CD4-positive, alpha-beta memory T cell (primary cell): ENCODE measurements at regions of chr3 and their contacts with region 1.

Region 1: DNA sequence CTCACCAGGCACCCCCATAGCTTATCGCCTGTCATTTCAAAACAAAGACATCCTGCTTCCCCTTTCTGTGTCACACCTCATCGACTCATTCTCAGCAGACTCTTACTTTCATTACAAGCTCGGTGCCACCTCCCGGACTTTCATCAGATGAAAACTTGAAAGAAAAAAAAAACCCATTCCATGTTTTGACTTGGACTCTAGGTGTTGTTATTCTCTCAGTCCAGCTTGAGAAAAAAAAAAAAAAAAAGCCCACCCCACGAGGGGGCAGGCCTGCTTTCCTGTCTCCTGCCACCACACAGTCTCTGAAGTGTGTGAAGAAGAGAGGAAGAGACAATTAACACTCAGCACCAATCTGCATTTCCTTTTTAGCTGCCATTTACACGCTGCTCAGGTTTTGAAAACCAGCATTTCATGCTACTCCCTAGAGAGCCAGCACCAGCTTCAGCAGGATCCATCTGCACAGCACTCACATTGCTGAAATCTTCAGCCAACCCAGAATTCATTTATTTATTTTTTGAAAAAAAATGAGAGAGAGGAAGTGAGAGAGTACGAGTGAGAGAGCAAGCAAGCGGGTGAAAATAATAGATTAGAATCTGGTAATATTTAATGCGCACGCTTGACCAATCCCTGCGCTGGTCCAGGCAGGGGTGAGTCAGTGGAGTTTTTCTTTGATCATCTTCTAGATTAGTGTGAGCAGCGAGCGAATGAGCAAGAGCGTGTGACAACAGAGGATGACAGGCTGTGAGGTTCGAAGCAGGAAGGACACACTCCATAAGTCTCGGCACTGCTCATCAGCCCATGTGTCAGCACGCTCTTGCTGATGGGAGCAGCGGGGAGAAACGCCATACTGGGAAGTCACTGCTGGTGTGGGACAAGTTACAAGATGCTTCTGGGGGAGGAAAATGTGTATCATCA is 23.5 kb downstream of the ZNF80 start:
- DNase-seq: peak; percentile 74 to 92 (median 79)
- H3K4me3 ChIP-seq: peak overlapping the region; percentile 26 to 58
- H3K4me3 Mint-ChIP-seq: no peak overlapping the region
- H3K27ac ChIP-seq: peak overlapping the region; percentile 86
- H3K27ac Mint-ChIP-seq: no peak overlapping the region
- H3K4me1 ChIP-seq: peaks cover 71% of the 10 kb centered on the region
- H3K4me1 Mint-ChIP-seq: peaks cover 0 to 20% (median 7%) of the 10 kb centered on the region in 4 donors
- H3K27me3 ChIP-seq: no peaks in the 10 kb centered on the region
- H3K27me3 Mint-ChIP-seq: no peaks in the 10 kb centered on the region

Region 2: GRCh38 chr3:113552851-113553250 is 661.0 kb before region 1 on chr3:
- CTCF ChIA-PET with region 1: no interaction called
- POLR2A ChIA-PET with region 1: no interaction called
- intact Hi-C with region 1: no loop called
- DNase-seq: peak; percentile 19 to 40 (median 27)
- H3K4me3 ChIP-seq: no peak overlapping the region
- H3K4me3 Mint-ChIP-seq: no peak overlapping the region
- H3K27ac ChIP-seq: no peak overlapping the region
- H3K27ac Mint-ChIP-seq: peak overlapping the region in 3 of 7 donors; percentile 2 to 77 (median 25)
- H3K4me1 ChIP-seq: peaks cover 15% of the 10 kb centered on the region
- H3K4me1 Mint-ChIP-seq: peaks cover 31 to 63% (median 38%) of the 10 kb centered on the region in 4 donors
- H3K27me3 ChIP-seq: no peaks in the 10 kb centered on the region
- H3K27me3 Mint-ChIP-seq: no peaks in the 10 kb centered on the region

Region 3: DNA sequence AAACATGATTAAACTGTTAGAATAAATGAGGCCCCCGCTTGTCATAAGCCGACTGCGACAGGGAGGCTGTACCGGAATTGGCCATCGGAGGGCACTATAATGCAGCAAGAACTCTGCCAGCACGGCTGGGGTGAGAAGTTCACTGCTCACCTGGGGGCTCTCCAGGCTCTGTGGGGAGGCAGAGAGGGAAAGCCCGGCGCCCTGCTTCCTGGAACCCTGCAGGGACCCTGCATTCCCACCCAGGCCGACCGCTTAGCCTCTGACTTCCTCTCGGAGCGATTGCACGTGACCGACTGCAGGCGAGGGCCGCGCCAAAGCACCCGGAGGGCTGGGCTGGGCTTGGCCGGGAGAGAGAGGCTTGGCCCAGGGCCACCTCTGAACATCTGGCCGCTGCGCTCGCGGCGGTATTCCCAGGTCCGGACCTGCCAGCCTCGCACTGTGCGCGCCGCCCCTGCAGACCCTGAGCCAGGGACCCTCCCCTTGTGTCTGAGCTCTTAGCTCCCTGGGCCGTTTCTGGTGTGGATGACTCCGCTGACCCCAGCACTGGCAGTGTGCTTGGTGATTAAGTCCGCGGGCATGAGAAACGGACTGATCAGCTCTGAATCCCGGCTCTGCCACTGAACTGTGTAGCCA is 61.2 kb before region 1 on chr3:
- CTCF ChIA-PET with region 1: interaction called, 20 read pairs
- POLR2A ChIA-PET with region 1: interaction called, 19 read pairs
- intact Hi-C with region 1: loop called (anchors 1 kb)
- DNase-seq: peak; percentile 76 to 81 (median 78)
- H3K4me3 ChIP-seq: peak overlapping the region in 1 of 2 donors; percentile 34
- H3K4me3 Mint-ChIP-seq: peak overlapping the region; percentile 58 to 76 (median 68)
- H3K27ac ChIP-seq: no peak overlapping the region
- H3K27ac Mint-ChIP-seq: peak overlapping the region in 6 of 7 donors; percentile 4 to 79 (median 46)
- H3K4me1 ChIP-seq: peaks cover 6% of the 10 kb centered on the region
- H3K4me1 Mint-ChIP-seq: peaks cover 0 to 6% (median 5%) of the 10 kb centered on the region in 4 donors
- H3K27me3 ChIP-seq: no peaks in the 10 kb centered on the region
- H3K27me3 Mint-ChIP-seq: no peaks in the 10 kb centered on the region

Region 4: DNA sequence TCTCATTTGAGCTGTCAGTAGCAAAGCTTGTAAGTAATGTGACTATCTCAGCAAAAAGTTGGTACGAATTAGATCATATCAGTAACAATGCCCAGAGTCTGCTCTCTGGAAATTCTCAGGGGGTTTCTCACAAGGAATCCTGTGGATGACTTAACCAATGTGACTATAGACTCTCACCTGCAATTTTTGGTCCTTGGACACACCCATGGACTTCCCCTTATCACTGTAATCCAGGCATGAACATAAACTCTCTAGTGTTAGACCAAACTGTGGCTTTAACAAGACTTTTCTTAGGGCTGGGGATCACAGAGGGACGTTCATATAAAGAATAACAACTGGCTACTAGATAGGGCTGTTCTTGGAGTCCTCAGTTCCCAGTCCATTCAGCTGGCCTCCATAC is 27.4 kb after region 1 on chr3:
- CTCF ChIA-PET with region 1: interaction called, 44 read pairs
- POLR2A ChIA-PET with region 1: interaction called, 188 read pairs
- intact Hi-C with region 1: no loop called
- DNase-seq: no peak
- H3K4me3 ChIP-seq: no peak overlapping the region
- H3K4me3 Mint-ChIP-seq: no peak overlapping the region
- H3K27ac ChIP-seq: no peak overlapping the region
- H3K27ac Mint-ChIP-seq: peak overlapping the region in 4 of 7 donors; percentile 1 to 41 (median 8)
- H3K4me1 ChIP-seq: peaks cover 9% of the 10 kb centered on the region
- H3K4me1 Mint-ChIP-seq: peaks cover 9 to 22% (median 15%) of the 10 kb centered on the region in 4 donors
- H3K27me3 ChIP-seq: no peaks in the 10 kb centered on the region
- H3K27me3 Mint-ChIP-seq: no peaks in the 10 kb centered on the region

Region 5: DNA sequence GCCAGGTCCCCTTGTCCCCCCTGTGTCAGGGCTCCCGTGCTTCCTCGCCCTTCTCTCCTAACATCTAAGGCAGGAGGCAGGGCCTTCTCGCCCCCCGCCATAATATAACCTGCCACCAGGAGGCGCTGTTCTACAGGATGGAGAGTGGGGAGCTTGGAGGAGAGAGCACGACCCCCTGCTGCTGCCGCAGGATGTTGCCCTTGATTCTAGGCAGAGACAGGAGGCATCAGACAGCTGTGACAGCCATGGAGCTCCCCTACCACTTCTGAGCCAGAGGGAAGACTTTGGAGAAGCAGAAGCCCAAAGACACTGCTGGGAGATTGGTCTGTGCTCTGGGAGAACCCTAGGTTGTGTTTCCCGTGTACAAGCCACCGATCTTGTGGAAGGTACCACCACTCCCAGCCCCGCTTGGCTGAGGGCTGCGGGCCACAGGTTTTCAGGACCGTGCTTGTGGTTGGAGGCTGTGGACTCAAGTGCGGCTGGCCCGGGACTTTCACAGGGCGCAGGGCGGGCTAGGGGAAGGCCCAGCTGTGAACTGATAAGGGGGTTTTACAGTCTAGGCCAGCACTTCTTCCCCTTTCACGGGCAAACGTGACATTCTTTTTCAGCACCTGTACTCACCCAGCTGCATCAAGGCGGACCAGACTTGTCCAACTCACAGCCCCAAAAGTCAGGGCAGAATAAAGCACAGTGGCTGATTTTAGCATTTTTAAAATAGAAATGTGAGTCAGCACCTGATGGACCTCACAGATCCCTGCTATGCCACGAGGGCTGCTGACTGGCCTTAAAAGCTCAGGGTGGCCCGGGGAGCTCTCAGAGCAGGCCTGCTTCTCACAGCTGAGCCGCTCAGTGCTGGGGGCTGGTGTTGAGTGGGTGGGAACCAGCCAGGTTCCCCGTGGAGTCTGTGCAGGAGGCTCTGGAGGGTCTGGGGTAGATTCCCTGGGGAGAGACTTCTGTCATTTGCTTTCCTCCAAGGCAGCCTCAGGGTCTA is 77.3 kb after region 1 on chr3:
- CTCF ChIA-PET with region 1: interaction called, 138 read pairs
- POLR2A ChIA-PET with region 1: interaction called, 309 read pairs
- intact Hi-C with region 1: loop called (anchors 1 kb)
- DNase-seq: peak; percentile 85 to 93 (median 87)
- H3K4me3 ChIP-seq: peak overlapping the region; percentile 38 to 42
- H3K4me3 Mint-ChIP-seq: peak overlapping the region; percentile 79 to 91 (median 86)
- H3K27ac ChIP-seq: peak overlapping the region; percentile 76
- H3K27ac Mint-ChIP-seq: peak overlapping the region; percentile 90 to 97 (median 95)
- H3K4me1 ChIP-seq: peaks cover 49% of the 10 kb centered on the region
- H3K4me1 Mint-ChIP-seq: peaks cover 27 to 56% (median 43%) of the 10 kb centered on the region in 4 donors
- H3K27me3 ChIP-seq: no peaks in the 10 kb centered on the region
- H3K27me3 Mint-ChIP-seq: no peaks in the 10 kb centered on the region

Region 6: DNA sequence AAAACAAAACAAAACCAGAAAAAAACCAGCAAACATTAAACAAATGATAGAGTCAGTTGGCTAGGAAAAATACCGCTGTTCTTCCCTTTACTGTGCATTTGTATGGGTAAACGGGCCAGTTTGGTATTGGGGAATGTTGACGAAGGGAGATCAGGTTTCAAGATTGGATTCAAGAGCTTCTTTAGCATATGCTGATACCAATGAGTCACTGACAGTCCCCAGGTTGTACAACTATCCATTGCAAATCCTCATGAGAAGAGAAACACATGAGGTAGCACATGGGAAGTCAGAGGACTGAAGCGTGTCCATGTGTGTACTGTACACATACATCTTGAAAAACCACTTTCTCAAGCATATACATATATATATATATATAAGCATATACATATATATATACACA is 105.6 kb after region 1 on chr3:
- CTCF ChIA-PET with region 1: interaction called, 3 read pairs
- POLR2A ChIA-PET with region 1: interaction called, 18 read pairs
- intact Hi-C with region 1: no loop called
- DNase-seq: no peak
- H3K4me3 ChIP-seq: no peak overlapping the region
- H3K4me3 Mint-ChIP-seq: peak overlapping the region in 1 of 8 donors; percentile 60
- H3K27ac ChIP-seq: no peak overlapping the region
- H3K27ac Mint-ChIP-seq: peak overlapping the region in 2 of 7 donors; percentile 5 to 43
- H3K4me1 ChIP-seq: peaks cover 83% of the 10 kb centered on the region
- H3K4me1 Mint-ChIP-seq: peaks cover 26 to 67% (median 48%) of the 10 kb centered on the region in 4 donors
- H3K27me3 ChIP-seq: no peaks in the 10 kb centered on the region
- H3K27me3 Mint-ChIP-seq: no peaks in the 10 kb centered on the region

Region 7: DNA sequence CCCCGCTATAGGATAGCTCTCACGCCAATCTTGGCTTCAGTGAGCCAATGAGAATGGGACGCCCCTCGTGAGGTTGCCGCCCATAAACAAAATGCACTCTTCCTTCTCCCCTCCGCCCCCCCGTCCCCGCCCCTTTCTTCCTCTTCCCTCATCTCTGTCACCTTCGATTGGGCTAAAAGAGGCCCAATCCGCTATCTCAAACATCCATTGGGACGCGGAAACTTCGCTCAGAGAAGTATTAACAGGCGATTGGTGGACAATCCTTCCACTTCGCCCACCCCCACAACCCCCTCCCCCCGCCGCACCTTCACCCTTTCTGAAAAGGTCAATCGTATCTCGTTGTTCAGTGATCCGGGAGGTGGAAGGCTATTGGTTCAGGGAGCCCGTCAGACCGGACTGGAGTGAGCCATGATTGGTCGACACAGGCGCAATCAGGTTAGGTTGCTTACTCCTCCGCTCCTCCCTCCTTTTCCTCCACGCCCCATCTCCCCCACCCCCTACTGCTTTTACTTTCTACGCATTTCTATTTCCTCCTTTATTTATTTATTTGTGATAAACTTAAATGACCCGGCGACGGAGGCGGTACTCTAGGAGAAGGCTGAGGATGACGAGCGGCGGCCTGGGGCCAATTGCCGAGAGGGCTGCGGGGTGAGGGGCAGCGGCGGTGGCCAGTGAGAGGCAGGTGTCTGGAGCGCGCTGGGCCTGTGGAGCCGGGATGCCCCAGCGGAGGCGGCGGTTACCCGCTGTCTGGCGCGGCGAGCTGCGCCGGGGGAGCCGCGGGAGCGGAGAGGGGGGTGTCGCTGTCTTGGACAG is 933.7 kb after region 1 on chr3:
- CTCF ChIA-PET with region 1: no interaction called
- POLR2A ChIA-PET with region 1: interaction called, 17 read pairs
- intact Hi-C with region 1: loop called (anchors 1 kb)
- DNase-seq: peak; percentile 97 to 100 (median 98)
- H3K4me3 ChIP-seq: peak overlapping the region; percentile 43 to 73
- H3K4me3 Mint-ChIP-seq: peak overlapping the region; percentile 93 to 100 (median 98)
- H3K27ac ChIP-seq: peak overlapping the region; percentile 97
- H3K27ac Mint-ChIP-seq: peak overlapping the region; percentile 90 to 100 (median 100)
- H3K4me1 ChIP-seq: peaks cover 25% of the 10 kb centered on the region
- H3K4me1 Mint-ChIP-seq: peaks cover 16 to 48% (median 28%) of the 10 kb centered on the region in 4 donors
- H3K27me3 ChIP-seq: no peaks in the 10 kb centered on the region
- H3K27me3 Mint-ChIP-seq: no peaks in the 10 kb centered on the region